ENCODE measurements at regions of chr1 and their contacts with region 1.

Region 1: GRCh38 chr1:44036409-44037139 is 5.3 kb upstream of the SLC6A9 start:
- DNase-seq: no peak
- ATAC-seq: peak; percentile 92
- H3K4me3 ChIP-seq: no peak overlapping the region
- H3K27ac ChIP-seq: no peak overlapping the region
- H3K4me1 ChIP-seq: peaks cover 9% of the 10 kb centered on the region; the same call in 1 of the 2 replicates
- H3K27me3 ChIP-seq: no peaks in the 10 kb centered on the region
- CTCF ChIP-seq: peak; percentile 91 to 96 (median 95)
- EP300 ChIP-seq: no peak
- POLR2A ChIP-seq: no peak
- RAD21 ChIP-seq: peak; percentile 83

Region 2: GRCh38 chr1:43529206-43529731 is 507.3 kb before region 1 on chr1:
- CTCF ChIA-PET with region 1: interaction called, 4 read pairs
- POLR2A ChIA-PET with region 1: no interaction called
- RAD21 ChIA-PET with region 1: no interaction called
- SMC1A ChIA-PET with region 1: interaction called, 4 read pairs
- in situ Hi-C with region 1: loop called (anchors 5 kb)
- intact Hi-C with region 1: loop called (anchors 1 kb)
- DNase-seq: peak; percentile 30
- ATAC-seq: peak; percentile 91
- H3K4me3 ChIP-seq: no peak overlapping the region
- H3K27ac ChIP-seq: no peak overlapping the region
- H3K4me1 ChIP-seq: no peaks in the 10 kb centered on the region
- H3K27me3 ChIP-seq: peaks cover 7 to 11% of the 10 kb centered on the region in 2 experiments
- CTCF ChIP-seq: peak; percentile 91 to 95 (median 95); a peak in 5 of 6 replicates
- EP300 ChIP-seq: no peak
- POLR2A ChIP-seq: no peak
- RAD21 ChIP-seq: peak; percentile 92

Region 3: DNA sequence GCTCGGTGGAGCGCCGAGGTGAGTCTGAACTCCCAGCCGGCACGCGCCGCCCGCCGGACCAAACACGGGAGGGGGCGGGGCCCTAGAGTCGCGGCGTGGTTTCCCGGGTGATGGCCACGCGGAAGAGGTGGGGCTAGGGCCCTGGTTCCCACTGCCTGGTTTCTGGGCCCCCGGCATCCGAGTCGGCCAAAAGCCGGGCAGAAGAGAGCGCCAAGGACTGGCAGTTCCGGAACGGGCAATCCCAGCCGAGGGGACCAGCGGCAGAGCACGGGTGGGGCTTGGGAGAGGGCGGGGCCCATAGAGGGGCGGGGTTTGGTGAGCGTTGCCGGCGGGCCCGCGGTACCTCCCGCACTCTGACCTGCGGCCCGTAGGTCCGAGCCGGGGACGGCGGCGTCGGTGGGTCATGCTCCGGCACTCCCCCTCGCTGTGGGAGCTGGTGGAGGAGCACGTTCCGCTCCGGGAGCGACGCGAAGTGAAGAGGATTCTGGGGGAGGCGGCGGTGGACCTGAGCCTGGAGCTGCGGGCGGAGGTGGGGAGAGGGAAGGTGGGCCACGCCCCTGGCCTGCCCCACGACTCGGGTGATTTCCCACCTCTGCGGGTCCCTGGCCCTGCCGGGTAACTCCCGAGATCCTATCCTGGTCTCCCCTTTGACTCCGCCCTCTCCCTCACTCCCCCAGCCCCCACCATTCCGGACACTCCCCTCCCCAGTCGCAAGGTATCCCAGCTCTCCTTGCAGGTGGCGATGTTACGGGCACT is 44.9 kb before region 1 on chr1 and contains the start of gene CCDC24:
- CTCF ChIA-PET with region 1: interaction called, 25 read pairs
- POLR2A ChIA-PET with region 1: interaction called, 5 read pairs
- RAD21 ChIA-PET with region 1: interaction called, 5 read pairs
- SMC1A ChIA-PET with region 1: interaction called, 3 read pairs
- in situ Hi-C with region 1: no loop called
- intact Hi-C with region 1: loop called (anchors 5 kb)
- DNase-seq: no peak
- ATAC-seq: peak; percentile 90
- H3K4me3 ChIP-seq: peak within 1 kb of the TSS; percentile 72
- H3K27ac ChIP-seq: peak within 1 kb of the TSS; percentile 42; the same call in 1 of the 2 replicates
- H3K4me1 ChIP-seq: peaks cover 17% of the 10 kb centered on the region
- H3K27me3 ChIP-seq: no peaks in the 10 kb centered on the region
- CTCF ChIP-seq: no peak
- EP300 ChIP-seq: no peak
- POLR2A ChIP-seq: peak; percentile 74
- RAD21 ChIP-seq: no peak
- polyA plus RNA-seq, gene CCDC24: 0.18 TPM in 1 of 2 experiments, not detected in the other

Region 4: DNA sequence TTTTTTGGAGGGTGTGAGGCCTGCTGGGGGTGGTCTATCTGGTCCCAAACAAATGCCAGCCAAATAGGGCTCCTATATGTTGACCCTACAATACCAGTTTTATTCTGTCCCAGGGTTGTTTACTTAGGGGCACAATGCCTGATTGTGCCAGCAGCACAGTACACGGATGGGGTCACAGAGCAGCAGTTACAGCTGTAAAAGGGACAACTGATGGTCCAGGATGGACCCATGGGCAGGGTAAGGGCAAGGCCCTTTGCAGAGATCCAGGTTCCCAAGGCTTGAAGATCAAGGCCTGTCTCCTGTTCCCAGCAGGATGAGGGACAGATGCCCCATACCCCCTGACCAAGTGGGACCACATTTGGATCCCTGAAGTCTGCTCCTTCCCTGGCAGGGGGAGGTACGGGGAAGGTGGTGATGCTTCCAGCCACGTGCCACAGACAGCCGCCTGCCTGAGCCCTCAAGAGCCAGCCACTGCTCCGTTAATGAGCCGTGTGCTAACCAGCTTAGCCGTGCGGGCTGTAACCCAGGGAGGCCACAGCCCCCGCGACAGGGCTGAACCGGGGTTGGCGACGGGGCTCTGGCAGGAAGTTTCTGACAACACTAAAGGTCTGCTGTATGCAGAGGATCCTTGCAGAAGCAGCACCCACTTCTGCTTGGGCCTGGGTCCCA is 23.5 kb before region 1 on chr1:
- CTCF ChIA-PET with region 1: interaction called, 167 read pairs
- POLR2A ChIA-PET with region 1: no interaction called
- RAD21 ChIA-PET with region 1: interaction called, 5 read pairs
- SMC1A ChIA-PET with region 1: interaction called, 7 read pairs
- in situ Hi-C with region 1: no loop called
- intact Hi-C with region 1: no loop called
- DNase-seq: no peak
- ATAC-seq: no peak
- H3K4me3 ChIP-seq: no peak overlapping the region
- H3K27ac ChIP-seq: no peak overlapping the region
- H3K4me1 ChIP-seq: no peaks in the 10 kb centered on the region
- H3K27me3 ChIP-seq: no peaks in the 10 kb centered on the region; a peak in 1 of 4 replicates
- CTCF ChIP-seq: no peak
- EP300 ChIP-seq: no peak
- POLR2A ChIP-seq: no peak
- RAD21 ChIP-seq: no peak

Region 5: DNA sequence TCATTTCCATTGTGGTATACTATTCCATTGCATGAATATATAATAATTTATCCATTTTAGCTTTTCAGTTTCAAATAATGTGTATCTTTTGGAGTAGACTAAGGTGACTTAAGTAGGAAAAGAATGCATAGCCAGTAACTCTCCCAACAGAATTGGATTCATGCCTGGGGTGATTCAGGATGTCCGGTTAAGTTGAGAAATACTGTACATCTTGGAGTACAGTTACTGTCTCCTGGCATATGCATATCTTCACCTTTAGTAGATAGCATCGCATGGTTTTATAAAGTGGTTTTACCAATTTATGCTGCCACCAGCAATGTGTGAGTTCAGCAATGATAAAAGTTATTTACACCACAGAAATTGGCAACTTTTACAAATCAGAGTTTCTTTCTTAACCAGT is 13.3 kb after region 1 on chr1:
- CTCF ChIA-PET with region 1: interaction called, 79 read pairs
- POLR2A ChIA-PET with region 1: no interaction called
- RAD21 ChIA-PET with region 1: interaction called, 6 read pairs
- SMC1A ChIA-PET with region 1: interaction called, 23 read pairs
- in situ Hi-C with region 1: no loop called
- intact Hi-C with region 1: no loop called
- DNase-seq: no peak
- ATAC-seq: no peak
- H3K4me3 ChIP-seq: no peak overlapping the region
- H3K27ac ChIP-seq: no peak overlapping the region
- H3K4me1 ChIP-seq: no peaks in the 10 kb centered on the region
- H3K27me3 ChIP-seq: no peaks in the 10 kb centered on the region
- CTCF ChIP-seq: no peak
- EP300 ChIP-seq: no peak
- POLR2A ChIP-seq: no peak
- RAD21 ChIP-seq: no peak